ENCODE measurements at regions of chr19 and their contacts with region 1.

Region 1: DNA sequence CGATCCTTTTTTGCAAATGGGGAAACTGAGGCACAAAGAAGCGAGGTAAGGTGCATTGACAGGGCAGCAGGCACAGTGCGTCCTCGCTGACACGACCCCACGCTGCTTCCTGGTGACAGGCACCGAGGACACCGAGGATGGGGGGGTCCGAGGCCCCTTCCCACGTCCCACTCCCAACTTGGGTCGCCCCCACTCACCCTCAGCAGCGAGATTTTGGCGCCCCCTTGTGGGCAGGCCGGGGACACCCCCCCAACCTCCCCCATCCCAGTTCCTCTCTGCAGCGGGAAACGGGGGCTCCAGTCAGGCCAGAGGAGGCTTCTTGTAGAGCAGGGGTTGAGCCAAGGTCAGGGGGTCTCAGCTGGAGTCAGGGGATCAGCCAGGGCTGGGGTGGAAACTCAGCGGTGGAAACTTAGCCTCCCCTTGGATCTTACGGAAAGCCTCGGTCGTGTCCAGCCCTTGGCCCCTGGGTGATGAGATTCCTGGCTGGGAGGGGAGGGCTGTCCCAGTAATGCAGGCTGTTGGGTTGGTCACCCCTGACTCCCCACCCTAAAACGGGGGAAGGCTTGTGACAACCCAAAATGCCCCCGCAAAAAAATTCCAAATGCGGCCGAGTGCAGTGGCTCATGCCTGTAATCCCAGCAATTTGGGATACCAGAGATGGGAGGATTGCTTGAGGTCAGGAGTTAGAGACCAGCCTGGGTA is 8.2 kb downstream of the SMIM24 start:
- DNase-seq: no peak
- ATAC-seq: peak; percentile 71

Region 2: DNA sequence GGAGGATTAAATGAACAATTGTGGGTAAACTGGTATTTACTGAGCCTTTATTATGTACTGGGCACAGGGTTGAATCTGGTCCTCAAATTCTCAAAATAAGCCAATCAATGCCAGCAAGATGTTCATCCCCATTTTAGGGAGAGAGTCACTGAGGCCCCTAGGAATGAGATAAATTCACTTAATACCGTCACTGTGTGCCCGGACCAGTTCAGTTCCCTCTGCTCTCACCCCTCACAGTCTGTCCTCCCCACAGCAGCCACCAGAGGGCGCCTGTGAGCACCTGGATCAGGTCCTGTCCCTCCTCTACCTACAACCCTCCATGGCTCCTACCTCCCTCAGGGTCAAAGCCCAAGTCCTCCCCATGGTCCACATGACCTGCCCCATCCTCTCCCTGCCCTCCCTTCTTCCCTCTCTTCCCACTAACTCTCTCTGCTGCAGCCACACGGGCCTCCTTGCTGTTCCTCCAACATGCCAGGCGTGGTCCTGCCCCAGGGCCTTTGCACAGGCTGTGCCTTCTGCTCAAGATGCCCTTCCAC is 147.7 kb before region 1 on chr19:
- intact Hi-C with region 1: loop called (anchors 5 kb)
- DNase-seq: peak; percentile 78
- ATAC-seq: peak; percentile 49

Measured in sciatic nerve (tissue), 2 donors.